ENCODE measurements at regions of chr13 and their contacts with region 1.

Region 1: GRCh38 chr13:77034881-77035280 is 7.9 kb upstream of the FBXL3 start:
- DNase-seq: no peak
- ATAC-seq: no peak
- H3K4me3 ChIP-seq: no peak overlapping the region
- H3K27ac ChIP-seq: no peak overlapping the region
- H3K4me1 ChIP-seq: peaks cover 0 to 9% (median 2%) of the 10 kb centered on the region in 12 donors
- H3K27me3 ChIP-seq: no peaks in the 10 kb centered on the region
- CTCF ChIP-seq: no peak
- POLR2A ChIP-seq: no peak

Region 2: DNA sequence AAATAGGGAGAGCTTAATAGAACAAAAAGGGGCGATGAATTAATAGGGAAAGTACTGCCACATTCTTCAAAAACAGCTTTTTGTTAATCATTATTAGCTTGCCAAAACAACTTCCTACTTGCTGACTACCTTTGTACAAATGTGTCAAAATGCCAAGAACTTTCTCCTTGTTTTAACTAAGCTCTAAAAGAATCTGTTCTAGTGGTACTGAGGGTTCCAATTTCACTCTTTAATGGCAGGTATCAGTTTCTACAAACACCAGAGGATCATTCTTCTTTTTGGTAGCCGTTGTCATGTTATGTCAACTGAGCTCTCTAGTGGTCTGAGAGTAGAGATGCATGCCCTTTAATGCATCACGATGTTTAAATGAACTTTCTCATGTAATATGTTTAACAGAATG is 21.5 kb after region 1 on chr13:
- intact Hi-C with region 1: no loop called
- DNase-seq: no peak
- ATAC-seq: no peak
- H3K4me3 ChIP-seq: no peak overlapping the region
- H3K27ac ChIP-seq: no peak overlapping the region
- H3K4me1 ChIP-seq: no peaks in the 10 kb centered on the region
- H3K27me3 ChIP-seq: no peaks in the 10 kb centered on the region
- CTCF ChIP-seq: no peak
- POLR2A ChIP-seq: no peak

Region 3: DNA sequence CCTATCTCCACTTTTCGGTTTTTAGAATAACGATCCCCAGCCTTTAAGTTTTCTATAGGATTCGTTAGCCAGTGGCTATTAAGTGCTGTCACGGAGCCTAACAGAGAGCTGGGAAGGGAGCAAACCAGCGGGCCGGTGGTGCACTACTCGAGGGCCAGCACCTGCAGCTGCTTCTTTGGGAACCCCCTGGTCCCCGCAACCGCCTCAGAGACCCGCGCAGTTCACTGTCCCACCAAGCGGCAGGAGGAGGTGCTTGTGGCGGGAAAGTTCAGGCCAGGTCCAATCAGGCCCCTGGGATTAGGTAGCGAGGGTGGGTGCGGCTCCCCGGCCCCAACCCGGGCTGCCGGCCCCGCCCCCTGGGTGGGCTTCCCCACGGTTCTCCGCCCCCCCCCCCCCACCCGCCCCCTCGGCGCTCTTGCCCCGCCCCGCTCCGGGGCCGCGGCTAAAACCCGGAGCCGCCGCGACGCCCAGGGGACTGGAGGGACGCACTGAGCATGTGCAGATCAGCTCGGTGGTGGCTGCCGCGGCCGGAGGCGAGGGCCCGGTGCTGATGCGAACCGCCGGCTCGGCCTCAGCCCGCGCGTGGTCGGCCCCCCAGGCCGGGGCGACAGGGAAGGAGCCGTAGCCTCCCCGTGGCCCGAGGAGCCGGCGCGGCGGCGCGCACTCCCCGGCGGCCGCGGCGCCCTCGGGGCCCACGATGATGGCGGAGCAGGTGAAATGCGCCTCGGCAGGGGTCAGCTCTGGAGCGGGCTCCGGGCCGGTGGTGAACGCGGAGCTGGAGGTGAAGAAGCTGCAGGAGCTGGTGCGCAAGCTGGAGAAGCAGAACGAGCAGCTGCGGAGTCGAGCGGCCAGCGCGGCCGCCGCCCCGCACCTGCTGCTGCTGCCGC is 662.6 kb after region 1 on chr13 and contains the start of gene SLAIN1:
- intact Hi-C with region 1: loop called in 1 of 10 experiments (anchors 10 kb)
- DNase-seq: peak; percentile 79 to 89 (median 81)
- ATAC-seq: peak; percentile 94 to 97 (median 96)
- H3K4me3 ChIP-seq: peak within 1 kb of the TSS; percentile 62 to 96 (median 74)
- H3K27ac ChIP-seq: peak within 1 kb of the TSS in 7 of 12 donors; percentile 9 to 70 (median 47)
- H3K4me1 ChIP-seq: peaks cover 0 to 28% (median 5%) of the 10 kb centered on the region in 12 donors
- H3K27me3 ChIP-seq: peaks cover 0 to 4% (median 0%) of the 10 kb centered on the region in 9 donors
- CTCF ChIP-seq: no peak
- POLR2A ChIP-seq: no peak
- total RNA-seq, gene SLAIN1: 5.1 to 14.9 (median 7.2) TPM

Measured in heart left ventricle (tissue), 16 donors.